Adrenal gland (tissue), 19 donors: ENCODE measurements at regions of chr7 and their contacts with region 1.

Region 1: GRCh38 chr7:148242294-148242801 is 348.2 kb upstream of the C7orf33 start:
- DNase-seq: peak in 5 of 7 donors; percentile 22 to 44 (median 30)
- H3K4me3 ChIP-seq: no peak overlapping the region
- H3K27ac ChIP-seq: no peak overlapping the region
- H3K4me1 ChIP-seq: peaks cover 0 to 5% of the 10 kb centered on the region in 2 donors
- H3K27me3 ChIP-seq: no peaks in the 10 kb centered on the region
- CTCF ChIP-seq: peak; percentile 61 to 82 (median 73)
- POLR2A ChIP-seq: no peak

Region 2: DNA sequence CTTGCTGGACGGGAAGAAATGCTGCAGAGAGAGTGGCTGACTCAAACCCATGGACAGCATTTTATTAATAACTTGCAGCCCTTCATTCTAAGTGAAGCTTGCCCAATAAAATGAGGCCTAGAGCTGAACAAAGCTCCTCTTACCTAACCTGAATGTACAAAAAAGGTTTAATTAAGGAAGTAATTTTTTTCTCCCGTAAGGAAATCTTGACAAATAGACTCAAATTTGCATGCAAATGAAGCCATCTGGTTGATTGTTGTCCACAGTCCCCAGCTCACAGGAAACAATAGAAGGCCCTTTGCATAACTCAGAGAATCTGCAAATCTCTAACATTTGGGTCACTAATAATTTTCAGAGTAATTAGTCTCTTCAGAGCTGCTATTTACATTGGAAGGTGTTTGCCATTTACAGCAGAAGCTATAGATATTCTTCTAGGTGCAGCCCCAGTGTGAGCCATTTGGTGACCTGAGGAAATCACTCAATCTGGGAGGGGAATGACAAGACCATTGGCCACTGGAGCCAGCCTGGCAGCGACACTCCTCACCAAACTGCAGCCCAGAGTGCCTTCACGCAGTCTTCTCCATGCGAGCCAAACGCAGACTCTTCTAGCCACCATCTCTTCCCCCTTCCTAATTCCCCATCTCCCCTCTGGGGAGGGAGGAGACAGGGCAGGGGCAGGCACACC is 134.8 kb before region 1 on chr7:
- intact Hi-C with region 1: loop called in 1 of 2 experiments (anchors 10 kb)
- DNase-seq: no peak
- H3K4me3 ChIP-seq: no peak overlapping the region
- H3K27ac ChIP-seq: no peak overlapping the region
- H3K4me1 ChIP-seq: no peaks in the 10 kb centered on the region
- H3K27me3 ChIP-seq: no peaks in the 10 kb centered on the region
- CTCF ChIP-seq: no peak
- POLR2A ChIP-seq: no peak

Region 3: GRCh38 chr7:148142660-148143248 is 99.6 kb before region 1 on chr7:
- intact Hi-C with region 1: loop called in 1 of 2 experiments (anchors 10 kb)
- DNase-seq: peak in 6 of 7 donors; percentile 20 to 53 (median 26)
- H3K4me3 ChIP-seq: no peak overlapping the region
- H3K27ac ChIP-seq: no peak overlapping the region
- H3K4me1 ChIP-seq: no peaks in the 10 kb centered on the region
- H3K27me3 ChIP-seq: no peaks in the 10 kb centered on the region
- CTCF ChIP-seq: peak; percentile 35 to 61 (median 42)
- POLR2A ChIP-seq: no peak

Region 4: GRCh38 chr7:148318102-148318811 is 75.9 kb after region 1 on chr7:
- intact Hi-C with region 1: no loop called
- DNase-seq: no peak
- H3K4me3 ChIP-seq: no peak overlapping the region
- H3K27ac ChIP-seq: no peak overlapping the region
- H3K4me1 ChIP-seq: no peaks in the 10 kb centered on the region
- H3K27me3 ChIP-seq: no peaks in the 10 kb centered on the region
- CTCF ChIP-seq: no peak
- POLR2A ChIP-seq: no peak